Adrenal gland (tissue), 19 donors: ENCODE measurements at regions of chrX and their contacts with region 1.

Region 1: DNA sequence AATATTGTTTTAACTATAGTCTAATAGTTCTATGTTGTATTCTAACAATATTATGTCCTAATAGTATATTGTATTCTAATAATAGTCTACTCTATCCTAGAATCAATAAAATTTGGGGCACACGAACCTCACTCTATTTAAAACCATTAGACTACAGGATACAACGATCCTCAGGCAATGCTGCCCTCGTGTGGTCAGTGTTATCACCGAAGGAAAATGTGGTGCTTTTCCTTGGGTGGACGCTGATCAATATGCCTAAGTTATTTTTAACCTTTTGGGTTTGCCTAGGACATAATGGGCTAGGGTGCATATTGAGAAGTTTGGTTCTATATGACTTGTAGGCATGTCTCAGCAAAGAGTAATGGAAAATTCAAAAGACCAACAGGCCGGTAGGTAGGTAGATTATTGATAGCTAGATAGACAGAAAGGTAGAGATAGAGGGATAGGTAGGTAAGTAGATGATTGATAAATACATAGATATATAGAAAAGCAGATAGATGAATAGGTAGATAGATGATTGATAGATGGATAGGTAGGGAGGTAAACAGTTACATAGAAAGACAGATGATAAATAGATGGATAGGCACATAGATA is 75.1 kb downstream of the PRKX start:
- DNase-seq: peak; percentile 17 to 64 (median 41)
- H3K4me3 ChIP-seq: no peak overlapping the region
- H3K27ac ChIP-seq: no peak overlapping the region
- H3K4me1 ChIP-seq: no peaks in the 10 kb centered on the region
- H3K27me3 ChIP-seq: no peaks in the 10 kb centered on the region
- CTCF ChIP-seq: peak; percentile 42 to 75 (median 60)
- POLR2A ChIP-seq: no peak

Region 2: DNA sequence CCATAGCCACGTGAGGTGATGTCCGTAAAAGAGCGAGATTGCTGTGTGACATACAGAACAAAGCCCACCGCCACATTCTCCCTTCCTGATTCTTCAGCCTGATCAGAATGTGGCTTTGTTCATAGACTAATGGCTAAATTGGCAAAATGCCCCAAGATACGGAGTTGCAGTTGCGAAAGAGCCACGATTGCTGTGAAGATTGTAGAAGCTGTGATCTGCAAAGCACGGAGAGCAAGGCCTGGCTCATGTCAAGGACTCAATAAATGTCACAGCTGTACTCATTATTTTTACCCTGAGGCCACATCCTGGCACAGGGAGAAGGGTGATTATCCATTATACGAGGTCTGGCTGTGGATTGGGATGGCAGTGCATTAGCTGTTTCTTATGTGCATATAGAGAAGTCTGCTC is 743.5 kb before region 1 on chrX:
- intact Hi-C with region 1: no loop called
- DNase-seq: peak; percentile 27 to 87 (median 42)
- H3K4me3 ChIP-seq: no peak overlapping the region
- H3K27ac ChIP-seq: no peak overlapping the region
- H3K4me1 ChIP-seq: peaks cover 0 to 5% of the 10 kb centered on the region in 2 donors
- H3K27me3 ChIP-seq: no peaks in the 10 kb centered on the region
- CTCF ChIP-seq: no peak
- POLR2A ChIP-seq: no peak

Region 3: GRCh38 chrX:3037218-3037617 is 601.2 kb before region 1 on chrX:
- intact Hi-C with region 1: loop called in 1 of 2 experiments (anchors 5 kb)
- DNase-seq: no peak
- H3K4me3 ChIP-seq: no peak overlapping the region
- H3K27ac ChIP-seq: no peak overlapping the region
- H3K4me1 ChIP-seq: no peaks in the 10 kb centered on the region
- H3K27me3 ChIP-seq: no peaks in the 10 kb centered on the region
- CTCF ChIP-seq: no peak
- POLR2A ChIP-seq: no peak

Region 4: DNA sequence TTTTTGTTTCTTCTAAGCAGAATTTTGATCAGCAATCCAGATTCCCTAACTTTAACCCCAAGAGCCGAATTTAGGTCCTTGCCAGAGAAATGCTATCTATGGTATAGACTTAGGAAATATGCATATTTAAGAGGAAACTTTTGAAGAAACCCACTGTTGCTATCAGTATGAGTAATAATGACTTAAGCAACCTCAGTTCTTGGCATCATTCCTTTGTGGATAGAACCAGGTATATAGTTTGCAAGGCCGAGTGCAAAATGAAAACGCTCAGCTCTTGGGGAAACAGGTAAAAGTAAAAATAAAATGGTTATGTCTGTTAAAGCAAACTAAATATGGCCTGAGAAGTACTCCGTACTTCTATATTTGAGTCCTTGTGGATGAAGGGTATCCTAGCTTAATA is 519.0 kb before region 1 on chrX:
- intact Hi-C with region 1: loop called (anchors 10 kb)
- DNase-seq: no peak
- H3K4me3 ChIP-seq: no peak overlapping the region
- H3K27ac ChIP-seq: no peak overlapping the region
- H3K4me1 ChIP-seq: no peaks in the 10 kb centered on the region
- H3K27me3 ChIP-seq: no peaks in the 10 kb centered on the region
- CTCF ChIP-seq: no peak
- POLR2A ChIP-seq: no peak

Region 5: GRCh38 chrX:3697701-3698279 is 59.4 kb after region 1 on chrX:
- intact Hi-C with region 1: no loop called
- DNase-seq: no peak
- H3K4me3 ChIP-seq: no peak overlapping the region
- H3K27ac ChIP-seq: no peak overlapping the region
- H3K4me1 ChIP-seq: no peaks in the 10 kb centered on the region
- H3K27me3 ChIP-seq: no peaks in the 10 kb centered on the region
- CTCF ChIP-seq: no peak
- POLR2A ChIP-seq: no peak

Region 6: DNA sequence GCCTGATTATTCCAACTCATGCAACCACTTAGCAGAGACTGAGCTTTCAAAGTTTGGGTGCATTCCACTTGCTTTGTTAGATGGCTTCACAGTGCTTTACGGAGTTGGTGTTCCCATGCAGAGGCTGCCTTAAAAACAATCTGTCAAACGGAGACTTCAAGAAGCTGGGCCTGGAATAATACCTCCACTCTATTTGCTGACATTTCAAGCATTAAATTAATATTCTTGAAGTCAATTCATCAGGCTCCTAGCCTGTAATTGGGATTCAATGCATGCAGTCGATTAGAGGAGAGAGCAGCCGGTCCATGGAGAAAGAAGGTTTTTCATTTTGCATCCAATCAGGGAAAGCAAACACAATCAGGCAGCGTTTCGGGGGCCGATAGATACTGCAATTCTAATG is 389.8 kb after region 1 on chrX:
- intact Hi-C with region 1: no loop called
- DNase-seq: no peak
- H3K4me3 ChIP-seq: no peak overlapping the region
- H3K27ac ChIP-seq: no peak overlapping the region
- H3K4me1 ChIP-seq: no peaks in the 10 kb centered on the region
- H3K27me3 ChIP-seq: no peaks in the 10 kb centered on the region
- CTCF ChIP-seq: no peak
- POLR2A ChIP-seq: no peak